H1 (cell line): ENCODE measurements at regions of chr11 and their contacts with region 1.

Region 1: GRCh38 chr11:116533186-116533825 is 239.5 kb downstream of the BUD13 start:
- DNase-seq: peak in 1 of 2 experiments; percentile 83
- H3K4me3 ChIP-seq: no peak overlapping the region; a peak in 1 of 8 replicates
- H3K27ac ChIP-seq: no peak overlapping the region
- H3K4me1 ChIP-seq: peaks cover 0 to 4% (median 1%) of the 10 kb centered on the region in 4 experiments; a peak in 2 of 7 replicates
- H3K27me3 ChIP-seq: peaks cover 0 to 3% (median 0%) of the 10 kb centered on the region in 4 experiments; a peak in 3 of 7 replicates
- CTCF ChIP-seq: peak; percentile 62 to 73 (median 63)
- EP300 ChIP-seq: no peak
- POLR2A ChIP-seq: no peak
- RAD21 ChIP-seq: peak; percentile 86 to 90

Region 2: DNA sequence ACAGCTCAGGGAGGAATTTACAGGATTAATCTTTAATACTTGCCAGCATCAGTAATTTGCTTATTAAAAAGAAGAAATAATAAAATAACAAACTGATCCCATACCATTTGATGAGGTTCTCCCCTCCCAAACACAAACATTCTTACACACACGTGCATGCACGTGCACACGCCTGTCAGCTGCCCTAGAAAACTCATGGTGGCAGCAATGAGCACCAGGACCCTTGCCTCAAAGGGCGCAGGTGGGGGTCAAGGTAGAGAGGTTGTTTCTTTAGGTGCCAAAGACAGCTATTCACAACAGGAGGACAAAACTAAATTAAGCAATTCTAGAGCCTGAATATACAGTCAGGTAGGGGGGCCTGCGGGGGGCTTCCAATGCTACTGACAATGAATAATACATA is 20.2 kb after region 1 on chr11:
- CTCF ChIA-PET with region 1: interaction called, 39 read pairs
- POLR2A ChIA-PET with region 1: no interaction called
- DNase-seq: no peak
- H3K4me3 ChIP-seq: no peak overlapping the region
- H3K27ac ChIP-seq: no peak overlapping the region
- H3K4me1 ChIP-seq: no peaks in the 10 kb centered on the region
- H3K27me3 ChIP-seq: peaks cover 0 to 2% (median 0%) of the 10 kb centered on the region in 4 experiments; a peak in 2 of 7 replicates
- CTCF ChIP-seq: peak in 2 of 3 experiments; percentile 24 to 36; a peak in 3 of 4 replicates
- EP300 ChIP-seq: no peak
- POLR2A ChIP-seq: no peak
- RAD21 ChIP-seq: peak; percentile 22 to 42; a peak in 3 of 4 replicates